Caco-2 (cell line): ENCODE measurements at regions of chr1 and their contacts with region 1.

Region 1: GRCh38 chr1:147389532-147390524 is 147.3 kb downstream of the CHD1L start:
- DNase-seq: peak in 1 of 2 experiments; percentile 56
- H3K4me3 ChIP-seq: no peak overlapping the region
- H3K4me3 Mint-ChIP-seq: no peak overlapping the region
- H3K27ac Mint-ChIP-seq: no peak overlapping the region
- H3K4me1 ChIP-seq: no peaks in the 10 kb centered on the region
- H3K4me1 Mint-ChIP-seq: no peaks in the 10 kb centered on the region
- H3K27me3 ChIP-seq: no peaks in the 10 kb centered on the region
- H3K27me3 Mint-ChIP-seq: no peaks in the 10 kb centered on the region
- CTCF ChIP-seq: peak; percentile 72 to 78

Region 2: GRCh38 chr1:147273409-147274336 is 116.2 kb before region 1 on chr1:
- CTCF ChIA-PET with region 1: interaction called, 39 read pairs
- POLR2A ChIA-PET with region 1: no interaction called
- intact Hi-C with region 1: loop called (anchors 1 kb)
- DNase-seq: peak in 1 of 2 experiments; percentile 50
- H3K4me3 ChIP-seq: no peak overlapping the region
- H3K4me3 Mint-ChIP-seq: no peak overlapping the region
- H3K27ac Mint-ChIP-seq: no peak overlapping the region
- H3K4me1 ChIP-seq: no peaks in the 10 kb centered on the region
- H3K4me1 Mint-ChIP-seq: no peaks in the 10 kb centered on the region
- H3K27me3 ChIP-seq: no peaks in the 10 kb centered on the region
- H3K27me3 Mint-ChIP-seq: no peaks in the 10 kb centered on the region
- CTCF ChIP-seq: peak; percentile 49 to 55